GM10248 (cell line): ENCODE measurements at regions of chrX and their contacts with region 1.

Region 1: DNA sequence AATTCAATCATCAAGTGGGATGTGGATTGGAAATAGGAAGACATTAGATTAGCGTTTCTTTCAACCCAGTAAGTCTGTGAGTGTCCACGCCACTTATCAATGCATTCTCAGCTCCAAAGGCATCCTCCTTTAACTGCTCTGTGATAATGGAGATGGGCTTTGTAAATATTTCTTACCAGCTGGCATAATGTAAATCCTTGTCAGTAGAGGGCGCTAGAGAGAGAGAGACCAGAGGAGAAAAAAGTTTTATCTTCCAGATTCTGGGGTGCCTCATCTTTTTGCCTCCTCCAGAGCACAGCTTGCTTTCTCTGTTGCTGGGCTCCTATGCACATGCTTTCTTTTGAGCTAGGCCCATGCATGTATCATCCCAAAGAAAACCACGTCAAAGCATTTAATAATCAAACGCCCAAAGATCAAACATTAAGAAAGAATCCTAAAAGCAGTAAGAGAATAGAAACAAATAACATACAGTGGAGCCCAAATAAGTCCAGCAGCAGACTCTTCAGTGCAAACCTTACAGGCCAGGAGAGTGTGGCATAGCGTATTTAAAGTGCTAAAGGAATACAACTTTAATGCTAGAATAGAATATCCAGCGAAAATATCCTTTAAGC is 9.6 kb upstream of the MTMR1 start:
- DNase-seq: peak; percentile 37
- CTCF ChIP-seq: peak; percentile 18

Region 2: GRCh38 chrX:150693775-150694574 is 10.3 kb after region 1 on chrX:
- CTCF ChIA-PET with region 1: interaction called, 15 read pairs
- POLR2A ChIA-PET with region 1: no interaction called
- DNase-seq: peak; percentile 87
- CTCF ChIP-seq: no peak

Region 3: DNA sequence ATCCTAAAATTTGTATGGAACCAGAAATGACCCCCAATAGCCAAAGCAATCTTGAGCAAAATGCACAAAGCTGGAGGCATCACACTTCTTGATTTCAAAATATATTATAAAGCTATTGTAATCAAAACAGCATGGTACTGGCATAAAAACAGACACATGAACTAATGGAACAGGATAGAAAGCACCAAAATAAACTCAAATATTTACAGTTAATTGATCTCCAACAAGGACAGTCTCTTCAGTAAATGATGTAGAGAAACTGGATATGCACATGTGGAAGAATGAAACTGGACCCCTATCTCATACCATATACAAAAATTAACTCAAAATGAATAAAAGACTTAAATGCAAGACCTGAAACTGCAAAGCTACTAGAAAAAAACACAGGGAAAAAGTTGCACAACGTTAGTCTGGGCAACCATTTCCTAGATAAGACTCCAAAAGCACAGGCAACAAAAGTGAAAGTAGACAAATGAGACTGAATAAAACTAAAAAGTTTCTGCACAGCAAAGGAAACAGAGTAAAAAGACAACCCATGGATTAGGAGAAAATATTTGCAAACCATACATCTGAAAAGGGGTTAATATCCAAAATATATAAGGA is 149.9 kb after region 1 on chrX:
- CTCF ChIA-PET with region 1: no interaction called
- POLR2A ChIA-PET with region 1: no interaction called
- DNase-seq: no peak
- CTCF ChIP-seq: no peak